Activated CD8-positive, alpha-beta T cell treated with anti-CD3 and anti-CD28 coated beads, Interleukin-2, amount 10 ng/mL, durations not matched to agents 7 days and 5 days (primary cell): ENCODE measurements at regions of chr7 and their contacts with region 1.

Region 1: DNA sequence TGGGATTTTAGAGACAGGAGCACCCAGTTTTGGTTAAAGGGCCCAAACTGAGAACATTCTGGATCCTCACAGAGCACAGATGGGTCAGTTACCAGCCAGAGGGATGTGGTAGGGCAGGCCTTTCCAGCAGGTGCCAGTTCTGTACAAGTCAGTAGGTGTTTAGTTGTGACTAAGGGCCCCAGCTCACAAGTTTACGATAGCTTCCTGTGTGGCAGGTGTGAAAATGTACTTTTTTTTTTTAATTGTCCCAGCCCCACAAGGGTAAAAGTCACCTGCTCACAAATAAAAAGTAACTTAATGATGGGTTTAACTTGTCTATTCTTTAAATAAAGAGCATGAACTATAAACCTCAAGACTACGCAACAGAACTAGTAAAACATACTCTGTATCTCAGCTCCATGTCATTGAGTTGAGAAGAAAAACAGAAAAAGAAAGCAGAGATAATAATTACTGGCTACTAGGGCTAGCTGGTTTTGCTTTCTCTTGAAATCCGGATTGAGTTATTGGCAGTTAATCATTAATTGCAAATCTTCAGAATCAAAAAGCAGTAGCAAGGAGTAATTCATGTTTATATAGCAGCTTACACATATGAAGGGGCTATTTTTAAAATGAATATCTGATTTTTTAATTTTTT is 15.4 kb downstream of the NFE2L3 start:
- DNase-seq: peak; percentile 43
- ATAC-seq: peak; percentile 82
- H3K4me3 Mint-ChIP-seq: no peak overlapping the region
- H3K27ac Mint-ChIP-seq: peak overlapping the region; percentile 71
- H3K4me1 Mint-ChIP-seq: peaks cover 42% of the 10 kb centered on the region
- H3K27me3 Mint-ChIP-seq: no peaks in the 10 kb centered on the region

Region 2: DNA sequence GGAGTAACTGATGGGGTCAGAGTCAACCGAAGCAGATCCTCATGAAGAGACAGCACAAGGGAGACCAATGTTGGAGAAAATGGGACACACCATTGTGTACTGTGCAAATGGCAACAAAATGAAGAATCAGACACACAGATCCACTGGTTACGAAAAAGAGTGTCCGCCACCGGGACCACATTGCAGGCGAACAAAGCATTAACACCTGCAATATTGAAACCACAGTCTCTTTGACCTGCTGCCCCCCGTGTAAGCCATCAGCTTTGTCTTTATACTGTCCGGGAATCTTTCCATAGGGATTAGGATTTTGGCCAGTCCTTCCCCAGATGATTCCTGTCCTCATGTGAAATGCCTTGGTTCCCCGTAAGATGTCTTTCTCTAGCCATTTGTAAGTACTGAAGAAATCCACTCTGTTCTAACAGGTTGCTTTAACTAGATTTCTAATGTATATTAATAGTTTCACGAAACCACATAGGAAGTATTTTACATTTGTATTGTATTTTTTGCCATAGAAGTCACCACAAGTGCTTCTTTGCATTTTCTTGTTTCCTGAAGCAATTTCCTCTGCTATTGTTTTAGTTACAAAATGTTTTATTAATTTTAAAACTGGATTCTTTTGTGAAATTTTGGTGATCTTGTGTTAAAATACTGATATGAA is 156.2 kb before region 1 on chr7:
- CTCF ChIA-PET with region 1: no interaction called
- POLR2A ChIA-PET with region 1: no interaction called
- DNase-seq: no peak
- ATAC-seq: no peak
- H3K4me3 Mint-ChIP-seq: no peak overlapping the region
- H3K27ac Mint-ChIP-seq: no peak overlapping the region
- H3K4me1 Mint-ChIP-seq: peaks cover 3% of the 10 kb centered on the region
- H3K27me3 Mint-ChIP-seq: peaks cover 24% of the 10 kb centered on the region

Region 3: GRCh38 chr7:26078437-26079336 is 88.7 kb before region 1 on chr7:
- CTCF ChIA-PET with region 1: interaction called, 10 read pairs
- POLR2A ChIA-PET with region 1: no interaction called
- DNase-seq: peak; percentile 85
- ATAC-seq: peak; percentile 100
- H3K4me3 Mint-ChIP-seq: peak overlapping the region; percentile 19
- H3K27ac Mint-ChIP-seq: no peak overlapping the region
- H3K4me1 Mint-ChIP-seq: peaks cover 11% of the 10 kb centered on the region
- H3K27me3 Mint-ChIP-seq: peaks cover 44% of the 10 kb centered on the region

Region 4: GRCh38 chr7:26187380-26188205 is 20.2 kb after region 1 on chr7:
- CTCF ChIA-PET with region 1: interaction called, 3 read pairs
- POLR2A ChIA-PET with region 1: interaction called, 17 read pairs
- DNase-seq: no peak
- ATAC-seq: peak; percentile 13
- H3K4me3 Mint-ChIP-seq: peak overlapping the region; percentile 6
- H3K27ac Mint-ChIP-seq: peak overlapping the region; percentile 67
- H3K4me1 Mint-ChIP-seq: peaks cover 71% of the 10 kb centered on the region
- H3K27me3 Mint-ChIP-seq: no peaks in the 10 kb centered on the region